ENCODE measurements at regions of chr15 and their contacts with region 1.

Region 1: DNA sequence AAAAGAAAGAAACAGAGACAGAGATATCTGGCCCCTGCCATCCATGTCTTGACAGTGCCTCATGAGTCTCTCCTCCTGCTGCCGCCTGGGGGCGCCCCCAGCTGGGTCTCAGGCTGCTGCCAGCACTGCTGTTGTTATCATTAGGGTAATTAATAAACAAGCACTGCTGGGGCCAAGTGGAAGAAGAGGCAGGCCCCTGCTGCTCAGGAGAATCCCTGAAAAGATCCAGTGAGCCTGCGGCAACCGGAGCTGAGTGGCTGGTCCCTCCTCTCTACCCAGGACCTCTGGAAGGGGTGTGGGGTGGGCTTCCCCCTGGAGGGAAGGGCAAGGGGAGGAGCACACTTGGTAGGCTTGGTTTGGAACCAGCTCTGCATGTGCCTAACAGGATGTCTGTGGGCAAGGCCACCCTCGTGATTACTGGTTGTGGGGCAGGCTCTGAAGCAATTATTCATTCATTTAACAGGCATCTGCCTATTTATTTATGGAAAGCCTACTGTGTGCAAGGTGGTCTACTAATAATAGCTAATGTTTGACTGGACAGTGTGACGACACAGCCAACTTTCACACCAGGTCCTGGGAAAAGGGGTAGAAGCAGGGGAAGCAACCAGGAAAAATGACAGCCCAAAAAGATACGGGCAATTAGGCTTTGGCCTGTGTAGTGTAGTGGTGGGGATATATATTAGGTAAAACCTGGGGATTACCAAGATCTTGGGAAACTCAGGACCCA is 1.2 kb upstream of the TYRO3 start:
- DNase-seq: peak; percentile 47
- ATAC-seq: peak; percentile 69
- H3K4me3 ChIP-seq: peak overlapping the region; percentile 67 to 82 (median 77)
- H3K27ac ChIP-seq: no peak overlapping the region
- H3K4me1 ChIP-seq: peaks cover 65% of the 10 kb centered on the region
- H3K27me3 ChIP-seq: peaks cover 0 to 8% of the 10 kb centered on the region in 2 experiments; a peak in 2 of 5 replicates
- CTCF ChIP-seq: peak; percentile 88
- EP300 ChIP-seq: no peak
- POLR2A ChIP-seq: no peak
- RAD21 ChIP-seq: peak; percentile 90

Region 2: GRCh38 chr15:41133454-41133853 is 424.4 kb before region 1 on chr15:
- CTCF ChIA-PET with region 1: no interaction called
- POLR2A ChIA-PET with region 1: no interaction called
- in situ Hi-C with region 1: no loop called
- intact Hi-C with region 1: no loop called
- DNase-seq: no peak
- ATAC-seq: no peak
- H3K4me3 ChIP-seq: no peak overlapping the region
- H3K27ac ChIP-seq: no peak overlapping the region
- H3K4me1 ChIP-seq: peaks cover 22% of the 10 kb centered on the region
- H3K27me3 ChIP-seq: peaks cover 0 to 4% of the 10 kb centered on the region in 2 experiments; a peak in 3 of 5 replicates
- CTCF ChIP-seq: no peak
- EP300 ChIP-seq: no peak
- POLR2A ChIP-seq: no peak
- RAD21 ChIP-seq: no peak

Region 3: DNA sequence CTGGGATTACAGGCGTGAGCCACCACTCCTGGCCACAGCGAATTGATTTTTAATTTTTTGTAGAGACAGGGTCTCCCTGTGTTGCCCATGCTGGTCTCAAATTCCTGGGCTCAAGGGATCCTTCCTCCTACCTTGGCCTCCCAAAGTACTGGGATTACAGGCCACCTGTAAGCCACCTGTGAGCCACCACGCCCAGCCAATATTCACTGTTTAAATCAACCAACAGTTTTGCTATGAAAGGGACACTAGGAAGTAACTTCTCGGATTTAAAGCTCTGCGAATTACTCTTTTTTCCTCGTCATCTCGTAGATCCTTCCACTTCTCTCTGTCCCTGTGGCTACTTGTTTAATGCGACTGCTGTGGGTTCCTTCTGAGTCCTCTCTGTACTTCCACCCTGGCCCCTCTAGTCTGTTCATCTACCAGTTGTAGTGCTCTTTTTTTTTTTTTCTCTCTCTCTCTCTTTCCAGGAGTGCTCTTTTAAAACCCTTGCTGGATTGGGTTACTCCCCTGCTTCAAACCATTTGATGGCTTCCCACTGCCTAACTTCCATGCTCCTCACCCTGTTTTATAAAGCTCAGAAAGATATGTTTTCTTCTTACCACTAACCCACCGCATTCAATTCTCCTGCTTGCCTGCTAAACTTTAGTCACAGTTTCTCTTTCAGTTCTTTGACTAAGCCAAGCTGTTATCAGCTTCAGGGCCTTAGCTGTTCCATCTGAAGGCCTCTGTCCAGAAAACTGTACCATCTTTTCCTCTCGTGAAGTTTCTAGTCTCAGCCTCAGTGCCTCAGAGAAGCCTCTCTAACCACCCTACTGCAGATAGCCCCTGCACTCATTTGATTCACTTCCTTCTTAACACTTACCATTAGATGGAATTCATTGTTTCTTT is 128.6 kb before region 1 on chr15:
- CTCF ChIA-PET with region 1: no interaction called
- POLR2A ChIA-PET with region 1: no interaction called
- in situ Hi-C with region 1: no loop called
- intact Hi-C with region 1: no loop called
- DNase-seq: no peak
- ATAC-seq: no peak
- H3K4me3 ChIP-seq: no peak overlapping the region
- H3K27ac ChIP-seq: no peak overlapping the region
- H3K4me1 ChIP-seq: 0 out of 2 replicates have a peak, but pooled peaks cover 1% of the 10 kb centered on the region
- H3K27me3 ChIP-seq: no peaks in the 10 kb centered on the region
- CTCF ChIP-seq: no peak
- EP300 ChIP-seq: no peak
- POLR2A ChIP-seq: no peak
- RAD21 ChIP-seq: no peak

Region 4: GRCh38 chr15:41544650-41545015 is 13.2 kb before region 1 on chr15:
- CTCF ChIA-PET with region 1: no interaction called
- POLR2A ChIA-PET with region 1: interaction called, 14 read pairs
- in situ Hi-C with region 1: no loop called
- intact Hi-C with region 1: no loop called
- DNase-seq: no peak
- ATAC-seq: peak; percentile 10
- H3K4me3 ChIP-seq: peak overlapping the region in 2 of 3 experiments; percentile 65 to 85; a peak in 3 of 6 replicates
- H3K27ac ChIP-seq: no peak overlapping the region
- H3K4me1 ChIP-seq: peaks cover 40% of the 10 kb centered on the region
- H3K27me3 ChIP-seq: no peaks in the 10 kb centered on the region
- CTCF ChIP-seq: no peak
- EP300 ChIP-seq: no peak
- POLR2A ChIP-seq: no peak
- RAD21 ChIP-seq: no peak

Region 5: DNA sequence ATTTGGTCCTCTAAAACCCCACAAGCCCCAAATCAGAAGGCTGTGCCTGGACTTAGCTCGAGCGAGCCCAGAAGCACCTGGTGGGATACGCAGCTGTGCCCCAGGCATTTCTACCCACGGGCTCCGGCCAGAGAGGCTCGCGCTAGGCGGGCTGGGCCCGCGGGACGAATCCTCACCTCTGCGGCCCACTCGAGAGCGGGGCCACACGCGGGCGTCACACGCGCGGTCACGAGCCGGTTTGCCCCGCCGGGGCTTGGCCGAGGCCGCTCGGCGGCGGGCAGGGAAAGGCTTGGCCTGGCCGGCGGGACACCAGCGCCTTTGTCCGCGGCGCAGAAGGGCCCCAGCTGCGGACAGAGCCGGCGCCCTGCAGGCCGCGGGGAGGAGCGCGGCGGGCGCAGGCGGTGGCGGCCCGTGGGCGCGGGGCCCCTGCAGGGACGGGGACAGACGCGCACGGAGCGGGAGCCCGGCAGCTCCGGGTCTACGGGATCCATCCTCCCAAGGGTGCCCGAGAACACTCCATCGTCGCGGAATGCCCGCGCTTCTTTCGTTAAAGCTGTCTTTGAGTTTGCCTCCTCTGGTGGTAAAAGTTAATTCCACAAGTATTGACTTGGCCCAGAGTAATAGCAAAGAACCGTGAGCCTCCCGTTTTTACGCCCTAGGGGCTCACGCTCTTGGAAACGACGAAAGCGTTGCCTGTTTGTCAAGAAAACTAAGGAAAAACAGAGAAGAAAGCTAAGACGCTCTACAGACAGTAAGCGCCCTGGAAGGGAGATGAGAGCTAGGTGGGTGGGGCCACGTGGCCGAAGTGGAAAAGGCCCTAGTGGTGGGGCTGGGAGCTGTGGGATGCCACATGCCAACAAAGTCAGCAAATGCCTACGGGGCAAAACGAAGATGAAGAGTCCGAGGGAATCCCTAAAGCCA is 27.6 kb after region 1 on chr15:
- CTCF ChIA-PET with region 1: interaction called, 10 read pairs
- POLR2A ChIA-PET with region 1: interaction called, 11 read pairs
- in situ Hi-C with region 1: no loop called
- intact Hi-C with region 1: no loop called
- DNase-seq: no peak
- ATAC-seq: peak; percentile 91
- H3K4me3 ChIP-seq: peak overlapping the region; percentile 57 to 70 (median 57); a peak in 5 of 6 replicates
- H3K27ac ChIP-seq: peak overlapping the region; percentile 61
- H3K4me1 ChIP-seq: peaks cover 20% of the 10 kb centered on the region
- H3K27me3 ChIP-seq: no peaks in the 10 kb centered on the region
- CTCF ChIP-seq: 0 out of 2 replicates have a peak, but pooled peaks have one; percentile 24
- EP300 ChIP-seq: no peak
- POLR2A ChIP-seq: no peak
- RAD21 ChIP-seq: peak; percentile 48

Region 6: DNA sequence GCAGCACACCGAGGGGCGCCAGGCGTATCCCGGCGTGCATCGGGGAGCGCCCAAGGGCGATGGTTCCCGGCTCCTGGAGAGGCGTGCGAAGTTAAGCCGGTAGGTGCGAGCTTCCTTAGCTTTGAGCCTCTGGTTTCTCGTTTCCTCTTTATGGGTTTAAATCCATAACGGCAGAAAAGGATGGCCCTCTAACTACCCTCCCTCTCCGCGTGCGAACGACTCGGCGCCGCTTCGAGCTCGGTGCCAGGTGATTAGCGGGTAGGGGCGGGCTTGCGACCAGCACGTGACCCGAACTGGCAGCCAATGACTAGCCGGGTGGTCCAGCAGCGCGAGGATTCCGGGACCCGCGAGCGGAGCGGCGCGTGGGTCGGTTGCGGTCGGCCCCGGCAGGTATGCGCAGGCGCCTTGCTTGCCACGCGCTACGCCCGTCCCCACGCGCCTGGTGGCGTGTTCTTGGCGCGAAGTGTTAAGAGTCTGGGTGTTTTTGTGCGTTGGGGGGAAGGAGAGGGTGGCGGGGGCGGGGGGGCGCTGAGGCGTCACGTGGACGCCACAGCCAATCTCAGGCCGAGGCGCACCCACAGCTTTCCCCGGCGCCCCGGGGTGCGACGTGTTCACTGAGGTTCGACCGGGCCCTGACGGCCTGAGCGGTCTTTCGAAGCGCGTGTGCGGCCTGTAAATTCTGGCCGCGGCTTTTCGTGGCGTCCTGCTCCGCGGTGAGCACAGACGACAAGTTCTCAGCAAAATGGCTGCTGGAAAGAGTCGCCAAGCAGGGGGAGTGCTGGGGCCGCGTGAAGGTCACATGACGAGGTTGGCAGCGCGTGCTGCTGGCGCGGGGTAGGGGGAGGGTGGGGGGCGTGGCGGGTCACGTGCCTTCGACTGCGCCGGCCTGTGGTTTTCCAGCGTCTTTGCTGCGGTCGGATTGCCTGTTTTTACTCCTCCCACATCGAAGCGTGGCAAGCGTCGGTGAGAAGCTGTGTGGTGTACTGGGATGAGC is 63.7 kb after region 1 on chr15:
- CTCF ChIA-PET with region 1: no interaction called
- POLR2A ChIA-PET with region 1: interaction called, 7 read pairs
- in situ Hi-C with region 1: no loop called
- intact Hi-C with region 1: loop called (anchors 5 kb)
- DNase-seq: peak; percentile 78
- ATAC-seq: peak; percentile 95
- H3K4me3 ChIP-seq: peak overlapping the region; percentile 36 to 63 (median 59); a peak in 5 of 6 replicates
- H3K27ac ChIP-seq: peak overlapping the region; percentile 83
- H3K4me1 ChIP-seq: peaks cover 26% of the 10 kb centered on the region
- H3K27me3 ChIP-seq: no peaks in the 10 kb centered on the region
- CTCF ChIP-seq: no peak
- EP300 ChIP-seq: peak in 1 of 2 experiments; percentile 38; a peak in 1 of 4 replicates
- POLR2A ChIP-seq: peak; percentile 60 to 81
- RAD21 ChIP-seq: peak; percentile 10; the same call in 1 of the 2 replicates

Region 7: GRCh38 chr15:41695750-41696426 is 138.1 kb after region 1 on chr15:
- CTCF ChIA-PET with region 1: no interaction called
- POLR2A ChIA-PET with region 1: no interaction called
- in situ Hi-C with region 1: no loop called
- intact Hi-C with region 1: no loop called
- DNase-seq: peak; percentile 18
- ATAC-seq: peak; percentile 49; the same call in 2 of the 3 replicates
- H3K4me3 ChIP-seq: no peak overlapping the region
- H3K27ac ChIP-seq: no peak overlapping the region
- H3K4me1 ChIP-seq: peaks cover 18% of the 10 kb centered on the region
- H3K27me3 ChIP-seq: no peaks in the 10 kb centered on the region
- CTCF ChIP-seq: peak; percentile 50
- EP300 ChIP-seq: no peak
- POLR2A ChIP-seq: no peak
- RAD21 ChIP-seq: no peak

Region 8: GRCh38 chr15:41756198-41756597 is 198.4 kb after region 1 on chr15:
- CTCF ChIA-PET with region 1: no interaction called
- POLR2A ChIA-PET with region 1: no interaction called
- in situ Hi-C with region 1: no loop called
- intact Hi-C with region 1: no loop called
- DNase-seq: no peak
- ATAC-seq: no peak
- H3K4me3 ChIP-seq: no peak overlapping the region
- H3K27ac ChIP-seq: no peak overlapping the region
- H3K4me1 ChIP-seq: no peaks in the 10 kb centered on the region
- H3K27me3 ChIP-seq: no peaks in the 10 kb centered on the region
- CTCF ChIP-seq: no peak
- EP300 ChIP-seq: no peak
- POLR2A ChIP-seq: no peak
- RAD21 ChIP-seq: no peak

Region 9: DNA sequence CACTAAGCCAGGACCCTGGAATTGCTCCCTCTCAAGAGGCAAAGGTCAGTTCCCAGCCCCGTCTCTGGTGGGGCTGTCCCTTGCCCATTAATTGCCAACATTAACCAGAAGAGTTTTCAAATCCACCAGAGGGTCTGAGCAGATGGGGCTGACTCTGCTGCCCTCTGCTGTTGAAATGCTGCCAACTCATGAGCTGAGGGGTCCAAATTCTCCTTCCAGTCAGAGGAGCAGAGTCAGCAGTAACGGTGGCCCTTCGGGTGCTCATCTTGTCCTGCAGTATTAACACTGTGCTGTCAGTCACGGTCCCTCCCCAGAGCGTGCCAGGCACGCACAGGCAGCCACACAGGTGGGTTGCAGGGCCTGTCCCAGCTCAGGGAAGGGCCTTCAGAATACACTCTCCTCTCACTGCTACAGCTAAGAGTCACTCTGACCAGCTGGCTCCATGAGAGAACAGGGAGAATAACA is 346.7 kb after region 1 on chr15:
- CTCF ChIA-PET with region 1: no interaction called
- POLR2A ChIA-PET with region 1: no interaction called
- in situ Hi-C with region 1: no loop called
- intact Hi-C with region 1: loop called (anchors 5 kb)
- DNase-seq: peak; percentile 64
- ATAC-seq: peak; percentile 94
- H3K4me3 ChIP-seq: no peak overlapping the region
- H3K27ac ChIP-seq: no peak overlapping the region
- H3K4me1 ChIP-seq: no peaks in the 10 kb centered on the region
- H3K27me3 ChIP-seq: no peaks in the 10 kb centered on the region
- CTCF ChIP-seq: peak; percentile 94
- EP300 ChIP-seq: no peak
- POLR2A ChIP-seq: no peak
- RAD21 ChIP-seq: peak; percentile 85

Measured in HepG2 (cell line).